ENCODE measurements at regions of chr1 and their contacts with region 1.

Region 1: GRCh38 chr1:24541711-24542346 is 14.1 kb upstream of the NCMAP start:
- DNase-seq: no peak
- ATAC-seq: no peak

Region 2: GRCh38 chr1:24513706-24514105 is 28.1 kb before region 1 on chr1:
- intact Hi-C with region 1: no loop called
- DNase-seq: no peak
- ATAC-seq: no peak

Region 3: DNA sequence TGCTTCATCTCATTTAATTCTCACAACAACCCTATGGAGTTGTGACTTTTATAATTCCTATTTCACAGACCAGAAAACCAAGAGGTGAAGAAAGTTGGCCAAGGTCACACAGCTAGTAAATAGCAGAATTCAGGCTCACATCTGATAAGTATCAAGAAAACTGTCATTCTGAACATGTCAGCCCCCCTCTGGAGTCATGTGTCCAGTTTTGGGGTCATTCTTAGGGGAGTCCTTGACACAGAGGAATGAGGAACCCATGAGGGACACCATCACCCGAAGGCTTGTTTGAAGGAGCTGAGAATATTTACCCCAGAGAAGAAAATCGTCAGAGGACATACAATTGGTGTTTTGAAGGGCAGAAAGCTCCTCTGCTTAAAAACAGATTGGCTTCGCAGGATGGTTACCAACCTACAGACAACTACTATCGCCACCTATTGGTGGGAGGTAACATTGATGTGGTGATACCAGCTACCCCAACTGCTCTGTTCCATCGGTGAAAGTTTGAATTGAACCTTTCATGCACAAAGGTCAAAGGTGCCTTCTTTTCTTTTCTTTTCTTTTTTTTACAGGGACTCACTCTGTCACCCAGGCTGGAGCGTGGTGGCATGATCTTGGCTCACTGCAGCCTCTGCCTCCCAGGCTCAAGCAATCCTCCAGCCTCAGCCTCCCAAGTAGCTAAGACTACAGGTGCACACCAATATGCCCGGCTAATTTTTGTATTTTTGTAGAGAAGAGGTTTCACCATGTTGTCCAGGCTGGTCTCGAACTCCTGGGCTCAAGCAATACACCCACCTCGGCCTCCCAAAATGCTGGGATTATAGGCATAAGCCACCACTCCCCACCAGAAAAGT is 45.4 kb after region 1 on chr1:
- intact Hi-C with region 1: loop called (anchors 5 kb)
- DNase-seq: no peak
- ATAC-seq: no peak

Region 4: DNA sequence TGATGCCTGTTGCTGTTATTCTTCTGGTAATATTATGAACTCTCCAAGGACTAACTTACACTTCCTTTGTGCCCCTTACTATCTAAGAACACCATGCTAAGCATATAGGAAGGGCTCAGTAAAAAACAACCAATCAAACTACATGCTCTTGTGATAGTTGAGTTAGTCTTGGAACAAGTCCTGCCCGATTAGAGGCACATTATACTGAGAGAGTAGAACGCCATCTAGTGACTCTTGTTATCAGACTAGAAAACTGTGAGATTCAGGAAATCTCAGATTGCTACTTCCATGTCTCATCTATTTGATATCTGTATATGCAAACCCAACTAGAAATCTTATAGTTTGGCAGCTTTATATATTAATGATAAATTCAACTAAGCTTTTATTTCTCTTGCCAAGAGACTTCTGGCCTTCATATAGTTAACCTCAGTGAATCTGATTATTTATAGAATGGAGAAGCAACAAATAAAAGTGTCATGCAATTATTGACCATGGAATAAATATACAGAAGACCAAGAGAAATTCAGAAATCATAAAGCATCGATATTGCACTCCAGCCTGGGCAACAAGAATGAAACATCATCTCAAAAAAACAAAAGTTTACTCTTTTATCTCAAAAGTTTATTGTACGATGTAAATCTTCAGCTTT is 93.5 kb after region 1 on chr1:
- intact Hi-C with region 1: loop called (anchors 1 kb)
- DNase-seq: no peak
- ATAC-seq: no peak

Region 5: DNA sequence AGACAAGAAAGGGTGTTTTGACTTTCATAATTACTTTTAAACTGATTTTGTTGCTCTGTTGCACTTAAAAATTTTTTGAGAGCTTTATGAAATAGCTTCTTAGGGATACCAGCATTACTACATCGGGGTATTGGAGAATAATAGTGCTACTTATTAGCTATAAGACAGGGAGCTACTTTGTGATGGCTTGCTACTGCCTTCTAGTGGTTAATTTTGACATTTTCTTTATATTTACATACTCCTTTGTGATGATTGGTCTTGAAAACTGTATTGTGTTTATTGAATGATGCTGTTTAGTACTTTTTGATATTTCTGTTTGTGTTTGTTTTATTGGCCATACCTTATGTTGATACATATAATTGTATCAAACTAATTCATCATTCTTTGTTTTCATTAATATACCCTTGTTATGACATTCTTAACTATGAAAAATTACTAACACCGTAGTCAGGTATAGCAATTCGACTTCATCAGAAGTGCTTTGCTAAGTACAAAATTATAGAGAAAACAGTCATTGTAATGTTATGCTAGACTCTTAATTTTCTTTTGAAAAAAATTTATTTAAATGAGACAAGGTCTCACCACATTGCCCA is 288.9 kb after region 1 on chr1:
- intact Hi-C with region 1: loop called (anchors 5 kb)
- DNase-seq: no peak
- ATAC-seq: peak; percentile 83